ENCODE measurements at regions of chrX and their contacts with region 1.

Region 1: GRCh38 chrX:127038065-127038464 is 218.5 kb downstream of the PRR32 start:
- DNase-seq: no peak
- ATAC-seq: no peak

Region 2: GRCh38 chrX:126770194-126770593 is 267.9 kb before region 1 on chrX:
- intact Hi-C with region 1: loop called in 1 of 2 experiments (anchors 5 kb)
- DNase-seq: no peak
- ATAC-seq: peak in 1 of 2 donors; percentile 30

Region 3: GRCh38 chrX:126820700-126821420 is 217.2 kb before region 1 on chrX:
- intact Hi-C with region 1: loop called in 1 of 2 experiments (anchors 10 kb)
- DNase-seq: peak; percentile 50
- ATAC-seq: peak; percentile 82 to 97

Measured in left cardiac atrium (tissue), 4 donors.